Mammary epithelial cell (primary cell): ENCODE measurements at regions of chr14 and their contacts with region 1.

Region 1: DNA sequence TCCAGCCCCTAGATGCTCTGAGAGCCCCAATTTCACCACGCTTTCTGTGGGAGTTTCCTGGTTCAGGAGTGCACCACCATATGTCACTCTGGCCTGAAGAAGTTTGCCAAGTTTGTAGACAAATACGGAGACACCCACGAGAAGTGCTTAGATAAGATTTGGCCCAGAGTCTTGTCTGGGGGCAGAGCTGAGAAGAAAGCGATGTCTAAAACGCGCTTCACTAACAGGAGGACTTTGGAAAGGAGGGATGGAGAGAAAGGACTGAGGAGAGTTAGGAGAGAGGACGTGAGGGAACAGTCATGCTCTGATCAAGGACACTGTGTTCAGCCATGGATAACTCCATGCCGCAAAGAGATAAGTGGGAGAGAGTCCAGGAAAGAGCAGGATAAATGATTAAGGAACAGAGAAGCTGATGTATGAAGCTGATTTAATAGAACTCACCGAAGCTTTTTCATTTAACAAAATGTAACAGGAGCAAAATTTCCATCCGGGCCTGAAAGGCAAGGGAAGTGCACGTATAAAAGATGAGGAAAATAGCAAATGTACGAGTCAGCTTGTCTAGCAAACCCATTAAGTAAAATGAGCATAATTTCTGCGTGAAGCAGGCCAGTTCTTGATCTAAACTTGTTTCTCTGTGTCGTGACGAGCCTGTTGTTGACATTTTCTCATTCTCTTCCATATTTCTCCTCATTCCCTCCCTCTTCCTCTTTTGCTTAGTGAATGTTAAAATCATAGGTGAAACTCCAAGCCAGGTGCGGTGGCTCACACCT is 23.4 kb upstream of the MAP3K9 start:
- DNase-seq: no peak
- H3K4me3 ChIP-seq: no peak overlapping the region
- H3K27ac ChIP-seq: no peak overlapping the region
- H3K4me1 ChIP-seq: no peaks in the 10 kb centered on the region
- H3K27me3 ChIP-seq: no peaks in the 10 kb centered on the region
- CTCF ChIP-seq: no peak

Region 2: GRCh38 chr14:70972107-70972976 is 139.6 kb after region 1 on chr14:
- CTCF ChIA-PET with region 1: no interaction called
- dilution Hi-C with region 1: no loop called
- in situ Hi-C with region 1: loop called in 1 of 2 experiments (anchors 5 kb)
- intact Hi-C with region 1: no loop called
- DNase-seq: peak; percentile 70
- H3K4me3 ChIP-seq: no peak overlapping the region
- H3K27ac ChIP-seq: no peak overlapping the region
- H3K4me1 ChIP-seq: no peaks in the 10 kb centered on the region
- H3K27me3 ChIP-seq: no peaks in the 10 kb centered on the region
- CTCF ChIP-seq: peak; percentile 85 to 92

Region 3: GRCh38 chr14:70988452-70988851 is 155.7 kb after region 1 on chr14:
- CTCF ChIA-PET with region 1: interaction called, 14 read pairs
- dilution Hi-C with region 1: no loop called
- in situ Hi-C with region 1: no loop called
- intact Hi-C with region 1: no loop called
- DNase-seq: no peak
- H3K4me3 ChIP-seq: no peak overlapping the region
- H3K27ac ChIP-seq: no peak overlapping the region
- H3K4me1 ChIP-seq: peaks cover 5% of the 10 kb centered on the region
- H3K27me3 ChIP-seq: no peaks in the 10 kb centered on the region
- CTCF ChIP-seq: no peak